ENCODE measurements at regions of chr12 and their contacts with region 1.

Region 1: DNA sequence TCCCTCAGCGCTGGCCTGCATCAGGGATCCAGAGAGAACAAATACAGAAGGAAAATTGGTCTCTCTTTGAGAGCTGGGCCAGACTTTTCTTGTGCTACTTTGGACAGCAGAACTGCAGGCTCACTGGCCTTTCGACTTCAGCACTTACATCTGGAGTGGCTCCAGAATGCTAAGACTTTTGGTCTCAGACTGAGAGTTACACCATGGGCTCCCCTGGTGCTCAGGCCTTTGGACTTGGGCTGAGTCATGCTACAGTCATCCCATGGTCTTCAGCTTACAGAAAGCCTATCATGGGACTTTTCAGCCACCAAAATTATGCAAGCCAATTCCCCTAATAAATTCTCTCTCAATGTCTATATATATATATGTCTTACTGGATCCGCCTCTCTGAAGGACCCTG is 9.0 kb upstream of the CD163 start:
- DNase-seq: peak; percentile 93
- H3K4me3 Mint-ChIP-seq: no peak overlapping the region
- H3K27ac Mint-ChIP-seq: no peak overlapping the region
- H3K4me1 Mint-ChIP-seq: no peaks in the 10 kb centered on the region
- H3K27me3 Mint-ChIP-seq: peaks cover 10% of the 10 kb centered on the region
- CTCF ChIP-seq: no peak

Region 2: GRCh38 chr12:7485095-7485494 is 27.5 kb before region 1 on chr12:
- CTCF ChIA-PET with region 1: no interaction called
- POLR2A ChIA-PET with region 1: no interaction called
- intact Hi-C with region 1: loop called (anchors 1 kb)
- DNase-seq: no peak
- H3K4me3 Mint-ChIP-seq: no peak overlapping the region
- H3K27ac Mint-ChIP-seq: no peak overlapping the region
- H3K4me1 Mint-ChIP-seq: no peaks in the 10 kb centered on the region
- H3K27me3 Mint-ChIP-seq: no peaks in the 10 kb centered on the region
- CTCF ChIP-seq: no peak